Activated CD4-positive, alpha-beta T cell treated with anti-CD3 and anti-CD28 coated beads for 36 hours (primary cell): ENCODE measurements at regions of chr19 and their contacts with region 1.

Region 1: GRCh38 chr19:43463381-43464136 is 1.8 kb downstream of the LYPD3 start:
- DNase-seq: peak; percentile 100
- ATAC-seq: peak; percentile 90
- H3K4me3 Mint-ChIP-seq: peak overlapping the region; percentile 87
- H3K27ac Mint-ChIP-seq: peak overlapping the region; percentile 93
- H3K4me1 Mint-ChIP-seq: peaks cover 48% of the 10 kb centered on the region
- H3K27me3 Mint-ChIP-seq: no peaks in the 10 kb centered on the region

Region 2: GRCh38 chr19:43503501-43504425 is 40.2 kb after region 1 on chr19:
- CTCF ChIA-PET with region 1: interaction called, 13 read pairs
- POLR2A ChIA-PET with region 1: interaction called, 10 read pairs
- intact Hi-C with region 1: loop called (anchors 1 kb)
- DNase-seq: peak; percentile 100
- ATAC-seq: peak; percentile 96
- H3K4me3 Mint-ChIP-seq: peak overlapping the region; percentile 96
- H3K27ac Mint-ChIP-seq: peak overlapping the region; percentile 94
- H3K4me1 Mint-ChIP-seq: peaks cover 32% of the 10 kb centered on the region
- H3K27me3 Mint-ChIP-seq: no peaks in the 10 kb centered on the region

Region 3: GRCh38 chr19:43526884-43527859 is 63.6 kb after region 1 on chr19 and contains the start of gene ETHE1:
- CTCF ChIA-PET with region 1: interaction called, 22 read pairs
- POLR2A ChIA-PET with region 1: interaction called, 9 read pairs
- intact Hi-C with region 1: loop called (anchors 1 to 2 kb)
- DNase-seq: peak; percentile 87
- ATAC-seq: peak; percentile 70
- H3K4me3 Mint-ChIP-seq: peak within 1 kb of the TSS; percentile 92
- H3K27ac Mint-ChIP-seq: peak within 1 kb of the TSS; percentile 94
- H3K4me1 Mint-ChIP-seq: peaks cover 22% of the 10 kb centered on the region
- H3K27me3 Mint-ChIP-seq: no peaks in the 10 kb centered on the region
- total RNA-seq, gene ETHE1: 68.7 to 78.8 TPM

Region 4: GRCh38 chr19:43575156-43575950 is 111.8 kb after region 1 on chr19 and contains the starts of genes PINLYP and XRCC1:
- CTCF ChIA-PET with region 1: no interaction called
- POLR2A ChIA-PET with region 1: no interaction called
- intact Hi-C with region 1: loop called in 1 of 2 experiments (anchors 1 kb)
- DNase-seq: peak; percentile 99
- ATAC-seq: peak; percentile 99
- H3K4me3 Mint-ChIP-seq: peak within 1 kb of the TSS; percentile 87
- H3K27ac Mint-ChIP-seq: peak within 1 kb of the TSS; percentile 94
- H3K4me1 Mint-ChIP-seq: peaks cover 41% of the 10 kb centered on the region
- H3K27me3 Mint-ChIP-seq: no peaks in the 10 kb centered on the region
- total RNA-seq, gene PINLYP: 3.5 to 3.6 TPM
- total RNA-seq, gene XRCC1: 31.6 to 40.0 TPM

Region 5: GRCh38 chr19:44746946-44747738 is 1283.6 kb after region 1 on chr19:
- CTCF ChIA-PET with region 1: no interaction called
- POLR2A ChIA-PET with region 1: no interaction called
- intact Hi-C with region 1: loop called in 1 of 2 experiments (anchors 5 kb)
- DNase-seq: peak; percentile 98
- ATAC-seq: peak; percentile 85
- H3K4me3 Mint-ChIP-seq: peak overlapping the region; percentile 91
- H3K27ac Mint-ChIP-seq: peak overlapping the region; percentile 95
- H3K4me1 Mint-ChIP-seq: peaks cover 43% of the 10 kb centered on the region
- H3K27me3 Mint-ChIP-seq: no peaks in the 10 kb centered on the region